ENCODE measurements at regions of chr3 and their contacts with region 1.

Region 1: DNA sequence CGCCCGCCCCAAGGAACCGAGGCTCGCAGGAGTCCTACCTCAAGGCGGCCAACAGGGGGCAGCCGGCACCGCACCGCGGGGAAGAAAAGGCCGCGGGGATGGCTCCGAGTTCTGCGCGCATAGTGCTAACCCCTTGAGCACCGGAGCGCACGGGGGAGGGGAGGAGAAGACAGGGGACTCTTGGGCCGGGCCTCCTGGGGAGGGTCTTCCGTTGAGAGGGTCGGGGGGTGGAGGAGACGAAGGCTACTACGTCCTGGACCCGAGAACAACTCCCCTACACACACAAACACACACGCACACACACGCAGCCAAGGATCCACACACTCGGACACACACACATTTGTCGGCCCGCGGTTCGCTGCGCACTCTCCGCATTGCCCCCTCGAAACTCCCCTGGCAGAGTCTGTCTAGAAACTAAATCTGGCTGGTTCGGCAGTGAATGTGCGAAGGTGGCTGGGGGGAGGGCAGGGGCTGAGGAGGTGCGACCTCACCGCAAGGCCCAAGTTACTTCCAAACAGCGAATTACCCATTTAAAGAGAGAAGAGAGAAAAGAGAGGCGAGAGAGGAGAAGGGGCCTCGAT is 1.8 kb downstream of the WNT5A start:
- DNase-seq: peak; percentile 90
- H3K4me3 ChIP-seq: peak overlapping the region; percentile 87
- H3K27ac ChIP-seq: peak overlapping the region; percentile 62
- H3K4me1 ChIP-seq: peaks cover 19% of the 10 kb centered on the region
- CTCF ChIP-seq: peak; percentile 65

Region 2: DNA sequence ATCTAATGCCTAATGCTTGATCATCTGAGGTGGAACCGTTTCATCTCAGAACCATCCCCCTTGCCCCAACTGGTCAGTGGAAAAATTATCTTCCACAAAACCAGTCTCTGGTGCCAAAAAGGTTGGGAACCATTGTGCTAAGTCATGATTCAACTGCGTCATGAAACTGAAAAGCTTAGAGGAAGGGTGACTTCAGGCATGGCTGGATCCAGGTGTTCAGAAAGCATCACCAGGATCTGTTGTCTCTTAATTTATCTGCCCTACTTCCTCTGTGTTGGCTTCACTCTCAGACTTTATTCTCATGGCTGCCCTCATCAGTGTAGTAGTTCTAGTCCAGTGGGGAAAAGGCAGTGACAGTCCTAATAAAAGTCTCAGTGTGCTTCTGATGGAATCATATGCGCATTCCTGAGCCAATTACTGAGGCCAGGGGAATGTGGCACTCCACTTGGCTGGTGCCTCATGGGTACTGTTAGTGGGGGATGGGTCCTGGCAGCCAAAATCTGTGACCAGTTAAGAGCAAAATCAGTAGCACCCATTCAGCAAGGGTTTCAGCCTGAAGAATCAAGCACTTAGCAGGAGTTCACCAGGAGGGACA is 108.5 kb before region 1 on chr3:
- CTCF ChIA-PET with region 1: no interaction called
- POLR2A ChIA-PET with region 1: no interaction called
- intact Hi-C with region 1: loop called (anchors 2 kb)
- DNase-seq: peak; percentile 85
- H3K4me3 ChIP-seq: peak overlapping the region; percentile 29
- H3K27ac ChIP-seq: peak overlapping the region; percentile 48
- H3K4me1 ChIP-seq: peaks cover 37% of the 10 kb centered on the region
- CTCF ChIP-seq: 0 out of 2 replicates have a peak, but pooled peaks have one; percentile 14

Region 3: GRCh38 chr3:55554634-55555425 is 69.5 kb after region 1 on chr3:
- CTCF ChIA-PET with region 1: no interaction called
- POLR2A ChIA-PET with region 1: interaction called, 11 read pairs
- intact Hi-C with region 1: no loop called
- DNase-seq: peak; percentile 85
- H3K4me3 ChIP-seq: no peak overlapping the region
- H3K27ac ChIP-seq: peak overlapping the region; percentile 41
- H3K4me1 ChIP-seq: peaks cover 32% of the 10 kb centered on the region
- CTCF ChIP-seq: no peak

Region 4: DNA sequence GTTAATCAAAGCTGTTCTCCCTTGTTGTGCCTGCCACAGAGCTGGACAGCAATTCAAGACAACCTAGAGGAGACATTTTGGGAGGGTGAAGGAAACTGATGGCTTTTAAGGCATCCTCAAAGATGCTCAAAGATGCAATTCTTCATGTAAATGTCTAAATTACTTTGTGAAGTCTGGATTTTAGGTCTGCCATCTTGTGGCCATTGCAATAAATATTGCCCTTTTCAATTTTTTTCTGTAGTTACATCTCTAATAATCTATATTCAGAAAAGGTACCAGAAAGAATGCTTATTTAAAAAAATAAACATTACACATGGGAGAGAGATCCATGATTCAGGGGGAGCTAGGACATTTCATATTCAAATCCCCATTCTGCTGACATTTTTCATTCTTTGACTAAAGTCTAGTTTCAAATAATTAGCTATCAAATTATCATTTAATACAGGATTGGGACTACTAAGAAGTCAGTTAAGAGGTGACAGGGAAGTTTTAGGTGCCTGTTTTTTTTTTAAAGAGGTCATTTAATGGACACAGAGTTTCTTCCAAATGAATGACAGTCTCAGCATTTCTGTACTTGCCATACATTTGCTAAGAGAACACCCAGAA is 261.6 kb after region 1 on chr3:
- CTCF ChIA-PET with region 1: no interaction called
- POLR2A ChIA-PET with region 1: no interaction called
- intact Hi-C with region 1: loop called (anchors 2 kb)
- DNase-seq: peak; percentile 67
- H3K4me3 ChIP-seq: no peak overlapping the region
- H3K27ac ChIP-seq: peak overlapping the region; percentile 12
- H3K4me1 ChIP-seq: peaks cover 19% of the 10 kb centered on the region
- CTCF ChIP-seq: peak; percentile 87

Region 5: DNA sequence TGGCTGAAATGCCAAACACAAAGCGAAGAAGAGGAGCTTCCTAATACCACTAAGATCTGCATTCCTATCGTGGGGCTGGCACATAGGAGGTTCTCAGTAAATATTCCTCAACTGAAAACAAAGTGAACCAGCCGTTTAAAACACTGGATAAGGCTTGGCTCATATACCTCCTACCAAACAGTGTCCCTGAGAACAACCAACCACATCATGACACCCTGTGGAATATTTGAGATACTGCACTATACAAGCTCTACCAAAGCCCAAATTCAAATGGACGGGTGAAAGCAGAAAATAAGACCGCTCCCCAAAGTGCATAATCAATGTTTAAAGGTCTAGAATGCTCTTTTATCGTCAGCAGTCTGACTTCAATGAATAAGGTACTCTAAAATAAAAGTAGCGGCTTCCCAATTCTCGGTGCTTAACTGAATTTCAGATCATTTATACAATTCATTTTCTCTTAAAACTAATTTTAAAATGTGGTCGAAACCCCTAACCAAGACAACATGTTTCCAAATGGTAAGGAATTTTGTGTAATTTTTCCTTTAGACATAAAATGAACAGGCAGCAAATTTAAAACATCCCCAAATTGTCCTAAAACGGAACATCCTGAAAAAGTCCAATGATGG is 557.1 kb after region 1 on chr3:
- CTCF ChIA-PET with region 1: no interaction called
- POLR2A ChIA-PET with region 1: interaction called, 3 read pairs
- intact Hi-C with region 1: loop called (anchors 10 kb)
- DNase-seq: peak; percentile 19
- H3K4me3 ChIP-seq: no peak overlapping the region
- H3K27ac ChIP-seq: no peak overlapping the region
- H3K4me1 ChIP-seq: no peaks in the 10 kb centered on the region
- CTCF ChIP-seq: peak; percentile 68

Region 6: GRCh38 chr3:56556908-56557830 is 1071.9 kb after region 1 on chr3 and contains the start of gene CCDC66:
- CTCF ChIA-PET with region 1: no interaction called
- POLR2A ChIA-PET with region 1: no interaction called
- intact Hi-C with region 1: loop called (anchors 5 kb)
- DNase-seq: peak; percentile 96
- H3K4me3 ChIP-seq: peak within 1 kb of the TSS; percentile 77
- H3K27ac ChIP-seq: peak within 1 kb of the TSS; percentile 73
- H3K4me1 ChIP-seq: peaks cover 14% of the 10 kb centered on the region
- CTCF ChIP-seq: peak; percentile 91
- total RNA-seq, gene CCDC66: 38.9 and 39.6 TPM in 2 replicates